ENCODE measurements at regions of chr15 and their contacts with region 1.

Region 1: DNA sequence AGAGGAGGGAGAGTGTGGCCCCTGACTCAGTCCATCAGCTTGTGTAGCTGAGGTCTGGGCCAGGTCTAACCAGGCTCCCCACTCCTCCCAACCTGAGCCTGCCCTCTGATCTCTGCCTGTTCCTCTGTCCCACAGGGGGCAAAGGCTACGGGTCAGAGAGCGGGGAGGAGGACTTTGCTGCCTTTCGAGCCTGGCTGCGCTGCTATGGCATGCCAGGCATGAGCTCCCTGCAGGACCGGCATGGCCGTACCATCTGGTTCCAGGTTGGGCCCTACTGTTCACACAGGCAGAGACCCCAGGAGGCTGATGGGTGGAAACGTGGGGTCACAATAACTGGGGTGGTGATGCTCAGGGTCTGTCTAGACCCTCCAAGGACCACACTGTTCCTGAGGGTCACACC is 6.8 kb downstream of the NEIL1 start:
- DNase-seq: no peak
- H3K4me3 Mint-ChIP-seq: no peak overlapping the region
- H3K27ac Mint-ChIP-seq: no peak overlapping the region
- H3K4me1 Mint-ChIP-seq: peaks cover 23% of the 10 kb centered on the region
- H3K27me3 Mint-ChIP-seq: peaks cover 3% of the 10 kb centered on the region

Region 2: GRCh38 chr15:75367913-75368688 is 14.5 kb after region 1 on chr15 and contains the start of gene MAN2C1:
- CTCF ChIA-PET with region 1: interaction called, 13 read pairs
- POLR2A ChIA-PET with region 1: interaction called, 4 read pairs
- DNase-seq: peak; percentile 93
- H3K4me3 Mint-ChIP-seq: peak within 1 kb of the TSS; percentile 83
- H3K27ac Mint-ChIP-seq: peak within 1 kb of the TSS; percentile 95
- H3K4me1 Mint-ChIP-seq: peaks cover 29% of the 10 kb centered on the region
- H3K27me3 Mint-ChIP-seq: no peaks in the 10 kb centered on the region
- total RNA-seq, gene MAN2C1: 151 to 205 TPM

Region 3: DNA sequence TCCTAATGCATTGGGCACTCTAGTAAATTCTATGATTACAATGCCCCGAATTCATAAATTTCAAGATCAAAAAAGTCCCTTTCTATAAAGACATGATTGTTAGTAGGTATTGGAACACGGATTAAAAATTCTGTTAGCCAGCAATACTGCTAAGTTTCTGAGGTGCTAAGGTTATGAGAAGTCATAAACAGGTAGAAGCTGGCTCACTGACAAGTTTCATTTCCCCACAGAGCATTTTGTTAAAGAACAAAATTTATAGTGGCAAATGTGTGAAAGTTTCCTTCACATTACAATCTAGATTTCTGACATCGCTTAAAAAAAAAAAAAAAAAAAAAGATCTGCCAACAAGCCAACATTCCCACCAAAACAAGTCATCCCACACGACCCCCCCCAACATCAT is 27.2 kb after region 1 on chr15:
- CTCF ChIA-PET with region 1: no interaction called
- POLR2A ChIA-PET with region 1: no interaction called
- DNase-seq: no peak
- H3K4me3 Mint-ChIP-seq: no peak overlapping the region
- H3K27ac Mint-ChIP-seq: no peak overlapping the region
- H3K4me1 Mint-ChIP-seq: peaks cover 4% of the 10 kb centered on the region
- H3K27me3 Mint-ChIP-seq: no peaks in the 10 kb centered on the region